Activated CD4-positive, alpha-beta T cell treated with anti-CD3 and anti-CD28 coated beads, Interleukin-2, amount 10 ng/mL, durations not matched to agents 24 days and 14 days (primary cell): ENCODE measurements at regions of chr18 and their contacts with region 1.

Region 1: DNA sequence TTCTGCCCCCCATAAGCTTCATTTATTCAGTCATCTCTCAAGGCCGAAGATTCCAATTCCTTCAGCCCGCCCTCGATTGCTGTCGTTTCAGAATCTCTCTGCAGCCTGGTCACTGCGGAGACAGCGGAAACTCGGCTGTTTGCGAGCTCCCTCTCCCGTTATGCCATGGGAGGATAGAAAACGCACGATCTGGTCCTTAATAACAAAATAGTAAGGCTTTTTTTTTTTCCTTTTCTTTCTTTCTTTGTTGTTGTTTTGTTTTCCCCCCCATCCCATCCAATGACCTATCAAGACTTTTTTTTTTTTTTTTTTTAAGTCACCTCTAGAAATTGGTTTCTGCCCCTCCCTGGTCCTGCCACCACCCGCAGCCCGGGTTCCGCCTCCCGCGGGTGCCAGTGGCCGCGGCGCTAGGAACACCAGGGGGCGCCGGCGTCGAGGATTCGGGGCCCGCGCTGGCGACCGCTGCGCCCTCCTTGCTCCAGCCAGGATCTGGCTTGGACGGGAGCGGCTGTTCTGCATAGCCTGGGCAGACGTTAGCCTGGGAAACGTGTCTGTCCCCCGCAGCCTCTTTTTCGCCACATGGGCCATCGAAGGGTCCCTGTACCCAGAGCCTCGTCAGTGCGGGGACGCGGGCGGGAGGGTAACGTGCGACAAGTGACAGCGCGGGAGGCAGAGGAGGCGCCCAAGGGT is 10.1 kb downstream of the CPLX4 start:
- DNase-seq: peak; percentile 93
- H3K4me3 Mint-ChIP-seq: peak overlapping the region; percentile 73
- H3K27ac Mint-ChIP-seq: no peak overlapping the region
- H3K4me1 Mint-ChIP-seq: no peaks in the 10 kb centered on the region
- H3K27me3 Mint-ChIP-seq: peaks cover 56% of the 10 kb centered on the region

Region 2: GRCh38 chr18:59249205-59249774 is 59.1 kb before region 1 on chr18:
- intact Hi-C with region 1: loop called (anchors 1 kb)
- DNase-seq: peak; percentile 80
- H3K4me3 Mint-ChIP-seq: no peak overlapping the region
- H3K27ac Mint-ChIP-seq: no peak overlapping the region
- H3K4me1 Mint-ChIP-seq: peaks cover 1% of the 10 kb centered on the region
- H3K27me3 Mint-ChIP-seq: peaks cover 47% of the 10 kb centered on the region

Region 3: DNA sequence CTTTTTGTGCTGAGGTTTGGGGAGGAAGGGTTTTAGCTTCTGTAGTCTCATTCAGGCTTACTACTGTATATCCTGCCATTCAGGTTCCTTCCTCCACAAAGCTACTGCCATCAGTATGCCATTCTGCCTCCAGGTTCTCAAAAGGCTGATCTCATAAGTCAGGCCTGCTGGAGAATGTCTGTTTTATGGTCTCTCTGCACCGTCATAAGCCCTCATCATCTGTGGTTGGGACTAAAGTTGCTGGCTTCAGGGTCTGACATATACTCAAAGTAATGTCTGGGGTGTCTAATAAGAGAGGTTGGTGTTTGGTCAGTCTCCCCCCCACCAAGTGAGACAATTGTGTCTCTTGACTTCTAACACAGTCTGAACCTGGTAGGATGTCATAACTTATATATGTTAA is 425.0 kb after region 1 on chr18:
- intact Hi-C with region 1: no loop called
- DNase-seq: no peak
- H3K4me3 Mint-ChIP-seq: no peak overlapping the region
- H3K27ac Mint-ChIP-seq: no peak overlapping the region
- H3K4me1 Mint-ChIP-seq: no peaks in the 10 kb centered on the region
- H3K27me3 Mint-ChIP-seq: peaks cover 3% of the 10 kb centered on the region